Activated naive CD8-positive, alpha-beta T cell treated with anti-CD3 and anti-CD28 coated beads, Interleukin-2, amount 10 ng/mL, durations not matched to agents 7 days and 5 days (primary cell): ENCODE measurements at regions of chr2 and their contacts with region 1.

Region 1: DNA sequence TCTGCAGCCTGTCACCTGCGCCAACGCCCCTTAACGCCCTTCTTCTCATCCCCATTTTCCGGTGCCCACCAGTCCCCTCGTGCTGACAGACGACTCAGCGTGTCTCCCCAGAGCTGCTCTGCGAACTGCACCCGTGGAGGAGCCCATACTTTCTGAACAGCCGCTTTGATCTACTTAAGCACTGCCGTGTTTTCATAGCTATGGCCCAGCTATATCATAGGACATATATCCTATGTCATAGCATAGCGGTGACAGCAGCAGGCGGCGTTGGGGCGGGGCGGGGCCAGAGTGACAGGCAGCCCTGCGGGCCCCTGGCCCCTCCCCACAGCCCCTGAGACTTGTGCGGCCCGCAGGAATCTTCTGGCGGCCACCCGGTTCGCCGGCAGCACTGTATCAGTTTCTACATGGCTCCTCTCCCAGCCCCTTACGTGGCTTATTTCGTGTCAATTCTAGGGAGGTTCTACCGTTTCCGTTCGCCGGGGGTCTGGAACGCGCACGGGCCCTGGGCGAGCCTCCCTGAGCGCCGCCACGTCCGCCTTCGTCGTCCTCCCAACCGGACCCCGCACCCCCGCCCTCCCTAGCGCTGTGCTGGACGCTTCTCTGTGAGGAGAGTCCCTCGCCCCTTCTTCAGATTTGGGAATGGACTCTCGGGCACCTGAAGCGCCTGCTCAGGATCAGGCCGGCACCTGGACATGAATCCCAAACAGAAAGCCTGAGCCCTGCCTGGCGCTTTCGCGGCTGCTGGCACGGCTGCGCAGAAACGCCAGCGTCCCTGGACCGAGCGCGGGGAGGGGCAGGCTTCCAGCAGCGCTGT is 35.4 kb downstream of the PTPN18 start:
- DNase-seq: peak; percentile 80
- ATAC-seq: peak; percentile 96
- H3K4me3 Mint-ChIP-seq: peak overlapping the region; percentile 93
- H3K27ac Mint-ChIP-seq: peak overlapping the region; percentile 92
- H3K4me1 Mint-ChIP-seq: peaks cover 4% of the 10 kb centered on the region
- H3K27me3 Mint-ChIP-seq: peaks cover 13% of the 10 kb centered on the region

Region 2: DNA sequence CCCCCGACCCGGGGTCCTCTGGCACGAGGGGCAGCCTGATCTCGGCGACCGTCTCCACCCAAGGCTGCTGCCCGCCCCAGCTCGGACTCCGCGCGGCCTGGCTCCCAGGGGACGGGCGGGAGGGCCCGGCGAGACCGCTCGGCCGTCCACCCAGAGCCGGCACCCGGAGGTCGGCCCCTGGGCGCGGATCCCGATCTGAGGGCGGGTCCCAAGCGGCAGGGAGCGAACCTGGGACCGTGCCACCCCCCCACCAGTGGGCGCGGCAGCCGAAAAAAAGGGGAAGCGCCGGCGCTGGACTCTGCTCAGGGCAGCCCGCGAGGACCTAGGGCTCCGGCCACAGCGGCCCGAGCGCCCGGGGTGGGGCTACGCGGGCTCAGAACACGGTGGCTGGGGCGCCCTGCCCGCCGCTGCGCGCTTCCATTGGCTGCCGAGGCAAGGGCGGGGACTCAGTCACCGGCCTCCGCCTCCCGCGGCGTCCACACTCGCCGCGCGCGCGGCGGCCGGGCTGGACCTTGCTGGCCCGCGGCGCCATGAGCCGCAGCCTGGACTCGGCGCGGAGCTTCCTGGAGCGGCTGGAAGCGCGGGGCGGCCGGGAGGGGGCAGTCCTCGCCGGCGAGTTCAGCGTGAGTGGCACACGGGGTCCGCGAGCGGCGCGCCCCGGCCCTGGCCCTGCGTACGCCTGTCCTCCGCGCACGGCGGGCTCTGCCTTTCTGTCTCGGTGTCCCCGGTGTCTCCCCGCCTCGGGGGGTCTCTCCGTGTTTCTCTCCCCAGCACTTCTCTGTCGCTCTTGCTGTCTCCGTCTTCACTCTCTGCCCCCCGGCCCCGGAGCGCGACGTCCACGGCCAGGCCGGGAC is 35.5 kb before region 1 on chr2 and contains the start of gene PTPN18:
- POLR2A ChIA-PET with region 1: no interaction called
- DNase-seq: peak; percentile 74
- ATAC-seq: peak; percentile 94
- H3K4me3 Mint-ChIP-seq: peak within 1 kb of the TSS; percentile 83
- H3K27ac Mint-ChIP-seq: no peak within 1 kb of the TSS
- H3K4me1 Mint-ChIP-seq: peaks cover 14% of the 10 kb centered on the region
- H3K27me3 Mint-ChIP-seq: peaks cover 2% of the 10 kb centered on the region
- total RNA-seq, gene PTPN18: 57.7 to 64.5 TPM

Region 3: DNA sequence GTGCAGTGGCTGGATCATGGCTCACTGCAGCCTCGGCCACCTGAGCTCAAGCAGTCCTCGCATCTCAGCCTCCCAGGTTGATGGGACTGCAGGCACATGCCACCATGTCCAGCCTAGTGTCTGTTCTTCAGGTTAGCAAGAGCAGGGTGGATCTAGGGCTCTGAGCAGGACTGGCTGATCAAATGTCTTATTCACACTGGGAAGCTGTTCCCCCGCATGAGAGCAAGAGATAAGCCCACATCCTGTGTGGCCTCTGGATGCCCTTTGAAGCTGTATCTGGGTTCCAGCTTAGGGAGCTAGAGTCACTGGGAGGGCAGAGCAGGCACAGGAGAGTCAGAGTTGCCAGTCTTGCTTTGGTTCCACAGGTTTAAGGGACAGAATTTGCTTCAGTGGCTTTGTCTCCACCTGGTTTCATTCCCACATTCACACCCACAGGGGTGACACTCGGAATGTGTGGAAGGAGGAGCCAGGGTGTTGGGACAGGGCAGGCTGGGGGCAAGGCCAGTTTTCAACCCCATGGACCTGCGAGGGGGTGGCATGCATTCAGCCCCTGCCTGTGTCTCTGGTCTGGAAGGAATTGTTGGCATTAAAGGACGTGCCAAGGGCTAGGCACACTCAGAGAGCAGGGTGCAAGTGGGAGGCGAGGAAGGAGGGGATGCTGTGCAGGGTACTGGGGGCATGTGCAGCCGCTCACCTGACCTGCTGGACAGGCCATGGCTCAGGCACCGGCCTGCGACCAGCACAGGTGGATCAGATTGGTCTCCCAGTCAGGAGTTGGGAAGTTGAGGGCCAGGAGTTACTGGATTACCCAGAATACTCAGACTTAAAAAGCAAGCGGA is 10.9 kb before region 1 on chr2:
- POLR2A ChIA-PET with region 1: interaction called, 15 read pairs
- DNase-seq: no peak
- ATAC-seq: peak; percentile 71
- H3K4me3 Mint-ChIP-seq: peak overlapping the region; percentile 19
- H3K27ac Mint-ChIP-seq: no peak overlapping the region
- H3K4me1 Mint-ChIP-seq: peaks cover 41% of the 10 kb centered on the region
- H3K27me3 Mint-ChIP-seq: no peaks in the 10 kb centered on the region